Gastrocnemius medialis (tissue), 4 donors: ENCODE measurements at regions of chr2 and their contacts with region 1.

Region 1: GRCh38 chr2:24382363-24383073 is 22.2 kb upstream of the ITSN2 start:
- DNase-seq: peak; percentile 28 to 31
- ATAC-seq: peak; percentile 85 to 95
- H3K4me3 ChIP-seq: peak overlapping the region in 1 of 4 donors; percentile 34
- H3K27ac ChIP-seq: no peak overlapping the region
- H3K4me1 ChIP-seq: no peaks in the 10 kb centered on the region
- H3K27me3 ChIP-seq: no peaks in the 10 kb centered on the region
- CTCF ChIP-seq: peak; percentile 28 to 91 (median 58)
- POLR2A ChIP-seq: no peak

Region 2: GRCh38 chr2:24231461-24231881 is 151.0 kb before region 1 on chr2:
- in situ Hi-C with region 1: loop called in 3 of 4 experiments (anchors 5 to 10 kb)
- intact Hi-C with region 1: no loop called
- DNase-seq: no peak
- ATAC-seq: no peak
- H3K4me3 ChIP-seq: no peak overlapping the region
- H3K27ac ChIP-seq: no peak overlapping the region
- H3K4me1 ChIP-seq: no peaks in the 10 kb centered on the region
- H3K27me3 ChIP-seq: no peaks in the 10 kb centered on the region
- CTCF ChIP-seq: no peak
- POLR2A ChIP-seq: no peak

Region 3: DNA sequence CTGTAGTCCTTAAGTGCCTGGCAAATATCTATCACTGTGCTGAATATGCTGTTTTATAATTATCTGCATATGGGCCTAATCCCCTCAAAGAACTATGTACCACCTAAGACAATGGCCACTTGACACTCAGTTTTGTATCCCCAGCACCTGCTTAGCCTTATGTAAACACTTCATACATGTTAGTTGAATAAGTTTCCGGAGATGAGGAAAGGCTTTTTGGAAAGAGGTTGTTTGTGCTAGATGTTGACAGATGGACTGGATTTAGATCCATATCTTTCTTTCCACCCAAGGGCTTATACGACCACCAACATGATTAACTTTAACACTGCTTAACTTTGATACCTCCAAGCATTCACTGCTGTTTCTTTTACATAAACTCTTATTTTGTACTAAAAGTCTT is 144.4 kb before region 1 on chr2:
- in situ Hi-C with region 1: loop called in 3 of 4 experiments (anchors 5 to 10 kb)
- intact Hi-C with region 1: loop called (anchors 1 kb)
- DNase-seq: no peak
- ATAC-seq: no peak
- H3K4me3 ChIP-seq: no peak overlapping the region
- H3K27ac ChIP-seq: no peak overlapping the region
- H3K4me1 ChIP-seq: no peaks in the 10 kb centered on the region
- H3K27me3 ChIP-seq: no peaks in the 10 kb centered on the region
- CTCF ChIP-seq: no peak
- POLR2A ChIP-seq: no peak

Region 4: DNA sequence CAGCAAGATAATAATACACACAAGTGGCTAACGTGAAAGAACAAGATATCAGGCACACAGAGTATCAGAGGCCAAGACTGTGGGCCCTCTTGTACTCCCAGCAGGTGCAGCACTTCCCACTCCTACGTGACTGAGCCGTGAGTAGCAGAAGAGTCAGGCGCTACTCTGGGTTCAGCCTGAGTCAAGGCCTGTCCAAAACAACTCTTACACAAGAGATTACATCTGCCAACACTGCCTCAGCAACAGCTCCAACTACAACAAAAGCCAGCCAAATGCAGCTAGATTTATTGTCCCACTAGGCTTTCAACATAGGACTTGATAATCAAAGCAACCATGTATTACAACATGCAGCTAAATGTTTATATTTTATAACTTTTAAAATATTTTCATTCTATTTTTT is 78.4 kb before region 1 on chr2:
- in situ Hi-C with region 1: loop called in 1 of 4 experiments (anchors 10 kb)
- intact Hi-C with region 1: loop called (anchors 1 kb)
- DNase-seq: peak; percentile 95 to 97
- ATAC-seq: peak; percentile 99 to 100
- H3K4me3 ChIP-seq: no peak overlapping the region
- H3K27ac ChIP-seq: peak overlapping the region; percentile 79 to 88 (median 84)
- H3K4me1 ChIP-seq: peaks cover 14 to 15% of the 10 kb centered on the region in 2 donors
- H3K27me3 ChIP-seq: no peaks in the 10 kb centered on the region
- CTCF ChIP-seq: peak in 1 of 5 experiments; percentile 12
- POLR2A ChIP-seq: no peak